ENCODE measurements at regions of chr4 and their contacts with region 1.

Region 1: GRCh38 chr4:139177868-139178611 is 1.0 kb upstream of the ELF2 start:
- DNase-seq: peak; percentile 95
- H3K4me3 Mint-ChIP-seq: peak overlapping the region; percentile 80
- H3K27ac Mint-ChIP-seq: peak overlapping the region; percentile 78
- H3K4me1 Mint-ChIP-seq: peaks cover 22% of the 10 kb centered on the region
- H3K27me3 Mint-ChIP-seq: peaks cover 4% of the 10 kb centered on the region

Region 2: GRCh38 chr4:139083956-139084803 is 93.9 kb before region 1 on chr4:
- CTCF ChIA-PET with region 1: interaction called, 5 read pairs
- POLR2A ChIA-PET with region 1: interaction called, 21 read pairs
- intact Hi-C with region 1: loop called (anchors 1 kb)
- DNase-seq: peak; percentile 90
- H3K4me3 Mint-ChIP-seq: peak overlapping the region; percentile 98
- H3K27ac Mint-ChIP-seq: peak overlapping the region; percentile 99
- H3K4me1 Mint-ChIP-seq: peaks cover 36% of the 10 kb centered on the region
- H3K27me3 Mint-ChIP-seq: no peaks in the 10 kb centered on the region

Region 3: DNA sequence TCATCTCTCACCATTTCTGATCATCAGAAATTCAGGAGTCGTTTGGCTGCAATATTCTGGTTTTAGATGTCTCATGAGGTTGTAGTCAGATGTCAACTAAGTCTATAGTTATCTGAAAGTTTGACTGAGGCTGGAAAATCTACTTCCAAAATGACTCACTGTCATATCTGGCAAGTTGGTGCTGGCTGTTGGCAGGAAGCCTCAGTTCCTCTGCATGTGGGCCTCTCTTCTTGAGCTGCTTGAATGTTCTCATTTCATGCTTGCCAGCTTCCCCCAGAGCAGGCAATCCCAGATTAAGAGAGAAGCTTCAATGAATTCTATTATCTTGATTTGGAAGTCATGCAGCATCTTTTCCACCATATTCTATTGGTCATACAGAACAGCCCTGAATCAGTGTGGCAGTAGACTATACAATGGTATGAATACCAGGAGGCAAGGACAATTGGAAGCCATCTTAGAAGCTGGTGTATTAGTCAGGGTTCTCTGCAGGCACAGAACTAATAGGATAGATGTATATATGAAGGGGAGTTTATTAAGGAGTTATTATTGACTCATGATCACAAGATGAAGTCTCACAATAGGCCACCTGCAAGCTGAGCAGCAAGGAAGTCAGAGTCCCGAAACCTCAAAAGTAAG is 45.8 kb after region 1 on chr4:
- CTCF ChIA-PET with region 1: no interaction called
- POLR2A ChIA-PET with region 1: no interaction called
- intact Hi-C with region 1: loop called (anchors 5 kb)
- DNase-seq: peak; percentile 34
- H3K4me3 Mint-ChIP-seq: no peak overlapping the region
- H3K27ac Mint-ChIP-seq: no peak overlapping the region
- H3K4me1 Mint-ChIP-seq: peaks cover 11% of the 10 kb centered on the region
- H3K27me3 Mint-ChIP-seq: no peaks in the 10 kb centered on the region

Region 4: GRCh38 chr4:139295206-139295941 is 117.3 kb after region 1 on chr4:
- CTCF ChIA-PET with region 1: interaction called, 16 read pairs
- POLR2A ChIA-PET with region 1: interaction called, 18 read pairs
- intact Hi-C with region 1: loop called (anchors 1 kb)
- DNase-seq: peak; percentile 97
- H3K4me3 Mint-ChIP-seq: peak overlapping the region; percentile 93
- H3K27ac Mint-ChIP-seq: peak overlapping the region; percentile 94
- H3K4me1 Mint-ChIP-seq: peaks cover 29% of the 10 kb centered on the region
- H3K27me3 Mint-ChIP-seq: no peaks in the 10 kb centered on the region

Region 5: GRCh38 chr4:139554893-139555704 is 377.1 kb after region 1 on chr4:
- CTCF ChIA-PET with region 1: no interaction called
- POLR2A ChIA-PET with region 1: interaction called, 6 read pairs
- intact Hi-C with region 1: loop called (anchors 1 kb)
- DNase-seq: peak; percentile 91
- H3K4me3 Mint-ChIP-seq: peak overlapping the region; percentile 95
- H3K27ac Mint-ChIP-seq: peak overlapping the region; percentile 96
- H3K4me1 Mint-ChIP-seq: peaks cover 62% of the 10 kb centered on the region
- H3K27me3 Mint-ChIP-seq: no peaks in the 10 kb centered on the region

Measured in activated CD4-positive, alpha-beta memory T cell treated with anti-CD3 and anti-CD28 coated beads for 36 hours (primary cell).